ENCODE measurements at regions of chr1 and their contacts with region 1.

Region 1: DNA sequence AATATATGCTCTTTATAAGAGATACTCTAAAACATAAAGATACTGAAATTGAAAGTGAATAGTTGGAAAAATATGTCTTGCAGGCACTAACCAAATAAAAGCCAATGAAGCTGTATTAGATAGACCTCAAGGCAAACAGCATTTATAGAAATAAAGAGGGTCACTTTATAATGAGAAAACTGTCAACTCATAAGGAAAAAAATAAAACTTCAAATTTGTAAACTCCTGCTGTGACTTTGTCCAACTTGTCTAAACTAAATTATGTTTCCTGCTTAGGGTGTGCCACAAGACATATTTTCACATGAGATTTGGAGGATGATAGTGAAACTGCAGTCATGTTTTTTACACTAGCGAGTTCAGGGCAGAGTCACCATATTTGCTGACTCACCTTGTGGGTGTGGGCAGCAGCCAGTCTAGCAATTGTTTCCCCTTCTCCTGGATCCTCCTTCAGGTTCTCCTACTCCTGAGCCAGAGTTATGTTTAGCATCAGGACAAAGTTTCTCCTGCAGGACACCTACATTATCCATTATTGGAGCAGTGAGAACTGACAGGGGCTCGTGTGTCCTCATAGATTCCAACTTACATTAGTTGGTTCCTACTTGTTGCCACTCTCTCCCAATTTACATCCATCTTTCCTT is 43.8 kb downstream of the CD53 start:
- DNase-seq: peak; percentile 72
- ATAC-seq: peak; percentile 99
- H3K4me3 ChIP-seq: peak overlapping the region; percentile 60
- H3K27ac ChIP-seq: peak overlapping the region; percentile 43
- H3K4me1 ChIP-seq: peaks cover 14% of the 10 kb centered on the region
- H3K27me3 ChIP-seq: no peaks in the 10 kb centered on the region
- CTCF ChIP-seq: no peak

Region 2: GRCh38 chr1:109979489-109980091 is 937.2 kb before region 1 on chr1:
- CTCF ChIA-PET with region 1: no interaction called
- POLR2A ChIA-PET with region 1: interaction called, 11 read pairs
- intact Hi-C with region 1: no loop called
- DNase-seq: peak; percentile 57
- ATAC-seq: 0 out of 2 replicates have a peak, but pooled peaks have one; percentile 10
- H3K4me3 ChIP-seq: no peak overlapping the region
- H3K27ac ChIP-seq: peak overlapping the region; percentile 28
- H3K4me1 ChIP-seq: peaks cover 55% of the 10 kb centered on the region
- H3K27me3 ChIP-seq: no peaks in the 10 kb centered on the region
- CTCF ChIP-seq: no peak

Region 3: GRCh38 chr1:110393691-110394564 is 522.9 kb before region 1 on chr1:
- CTCF ChIA-PET with region 1: no interaction called
- POLR2A ChIA-PET with region 1: no interaction called
- intact Hi-C with region 1: no loop called
- DNase-seq: peak; percentile 89
- ATAC-seq: peak; percentile 89
- H3K4me3 ChIP-seq: peak overlapping the region; percentile 21; the same call in 1 of the 2 replicates
- H3K27ac ChIP-seq: peak overlapping the region; percentile 69
- H3K4me1 ChIP-seq: peaks cover 26% of the 10 kb centered on the region
- H3K27me3 ChIP-seq: no peaks in the 10 kb centered on the region
- CTCF ChIP-seq: no peak

Measured in PC-3 (cell line).